HEK293 (cell line): ENCODE measurements at regions of chr2 and their contacts with region 1.

Region 1: GRCh38 chr2:175690113-175690837 is 311.8 kb downstream of the LNPK start:
- H3K4me3 ChIP-seq: no peak overlapping the region
- H3K27ac ChIP-seq: no peak overlapping the region
- H3K4me1 ChIP-seq: no peaks in the 10 kb centered on the region
- CTCF ChIP-seq: peak; percentile 25; the same call in 1 of the 2 replicates

Region 2: GRCh38 chr2:175366815-175367214 is 323.5 kb before region 1 on chr2:
- CTCF ChIA-PET with region 1: interaction called, 20 read pairs
- POLR2A ChIA-PET with region 1: no interaction called
- H3K4me3 ChIP-seq: no peak overlapping the region
- H3K27ac ChIP-seq: no peak overlapping the region
- H3K4me1 ChIP-seq: no peaks in the 10 kb centered on the region
- CTCF ChIP-seq: peak; percentile 82

Region 3: GRCh38 chr2:175463589-175464310 is 226.5 kb before region 1 on chr2:
- CTCF ChIA-PET with region 1: no interaction called
- POLR2A ChIA-PET with region 1: no interaction called
- H3K4me3 ChIP-seq: no peak overlapping the region
- H3K27ac ChIP-seq: no peak overlapping the region
- H3K4me1 ChIP-seq: no peaks in the 10 kb centered on the region
- CTCF ChIP-seq: no peak

Region 4: GRCh38 chr2:176079831-176080539 is 389.7 kb after region 1 on chr2:
- CTCF ChIA-PET with region 1: interaction called, 44 read pairs
- POLR2A ChIA-PET with region 1: no interaction called
- H3K4me3 ChIP-seq: peak overlapping the region; percentile 42
- H3K27ac ChIP-seq: peak overlapping the region; percentile 72; the same call in 1 of the 2 replicates
- H3K4me1 ChIP-seq: no peaks in the 10 kb centered on the region
- CTCF ChIP-seq: peak; percentile 95

Region 5: GRCh38 chr2:176088048-176088936 is 398.0 kb after region 1 on chr2:
- CTCF ChIA-PET with region 1: interaction called, 16 read pairs
- POLR2A ChIA-PET with region 1: no interaction called
- H3K4me3 ChIP-seq: no peak overlapping the region
- H3K27ac ChIP-seq: no peak overlapping the region; the same call in 1 of the 2 replicates
- H3K4me1 ChIP-seq: no peaks in the 10 kb centered on the region
- CTCF ChIP-seq: peak; percentile 85